ENCODE measurements at regions of chr6 and their contacts with region 1.

Region 1: GRCh38 chr6:116531675-116532570 is 13.6 kb downstream of the TRAPPC3L start:
- DNase-seq: no peak
- ATAC-seq: peak; percentile 78

Region 2: DNA sequence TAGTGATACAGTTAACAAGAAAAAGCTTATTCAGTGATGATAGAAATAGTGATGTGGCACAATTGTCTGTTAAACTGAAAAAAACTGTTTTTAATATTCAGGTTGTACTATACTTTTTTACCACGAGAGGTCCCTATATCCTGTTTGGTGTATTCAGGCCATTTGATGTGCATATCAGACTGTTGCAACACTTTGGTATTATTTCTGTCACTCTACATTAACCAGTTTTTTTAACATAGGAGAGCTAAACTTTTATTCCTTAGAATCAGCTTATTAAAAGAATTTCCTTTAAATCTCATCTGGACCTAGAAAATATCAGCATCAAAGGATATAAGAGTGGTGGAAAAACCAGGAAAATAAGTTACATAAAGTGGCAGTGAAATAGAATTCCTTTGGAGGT is 314.9 kb before region 1 on chr6:
- intact Hi-C with region 1: loop called (anchors 10 kb)
- DNase-seq: no peak
- ATAC-seq: peak; percentile 65

Region 3: GRCh38 chr6:116287689-116288282 is 244.1 kb before region 1 on chr6:
- intact Hi-C with region 1: loop called (anchors 2 kb)
- DNase-seq: no peak
- ATAC-seq: no peak

Region 4: DNA sequence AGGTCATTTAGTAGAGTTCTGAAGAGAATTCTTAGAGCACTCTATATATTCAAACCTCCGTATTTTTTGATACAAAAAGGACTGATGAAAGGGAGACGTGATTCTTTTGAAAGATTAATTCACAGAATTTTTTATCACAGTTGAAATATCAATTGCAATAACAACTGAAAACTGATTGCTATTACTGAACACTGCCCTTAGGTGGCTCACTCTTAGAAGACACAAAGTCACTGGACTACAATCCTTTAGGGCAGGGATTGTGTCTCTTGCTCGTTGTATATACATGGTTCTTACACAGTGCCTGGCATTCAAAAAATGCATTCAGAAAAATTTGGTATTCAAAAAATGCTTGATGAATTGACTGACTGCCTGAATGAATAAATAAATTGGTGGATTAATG is 87.8 kb before region 1 on chr6:
- intact Hi-C with region 1: loop called (anchors 5 kb)
- DNase-seq: no peak
- ATAC-seq: no peak

Region 5: GRCh38 chr6:116511404-116512110 is 20.4 kb before region 1 on chr6 and contains the start of gene CALHM5:
- intact Hi-C with region 1: loop called (anchors 2 kb)
- DNase-seq: peak; percentile 69
- ATAC-seq: peak; percentile 90
- total RNA-seq, gene CALHM5: 2.9 TPM

Region 6: GRCh38 chr6:116561377-116562018 is 29.6 kb after region 1 on chr6:
- intact Hi-C with region 1: loop called (anchors 2 kb)
- DNase-seq: peak; percentile 69
- ATAC-seq: peak; percentile 44

Measured in Right ventricle myocardium inferior (tissue), 1 donor.